ENCODE measurements at regions of chr3 and their contacts with region 1.

Region 1: DNA sequence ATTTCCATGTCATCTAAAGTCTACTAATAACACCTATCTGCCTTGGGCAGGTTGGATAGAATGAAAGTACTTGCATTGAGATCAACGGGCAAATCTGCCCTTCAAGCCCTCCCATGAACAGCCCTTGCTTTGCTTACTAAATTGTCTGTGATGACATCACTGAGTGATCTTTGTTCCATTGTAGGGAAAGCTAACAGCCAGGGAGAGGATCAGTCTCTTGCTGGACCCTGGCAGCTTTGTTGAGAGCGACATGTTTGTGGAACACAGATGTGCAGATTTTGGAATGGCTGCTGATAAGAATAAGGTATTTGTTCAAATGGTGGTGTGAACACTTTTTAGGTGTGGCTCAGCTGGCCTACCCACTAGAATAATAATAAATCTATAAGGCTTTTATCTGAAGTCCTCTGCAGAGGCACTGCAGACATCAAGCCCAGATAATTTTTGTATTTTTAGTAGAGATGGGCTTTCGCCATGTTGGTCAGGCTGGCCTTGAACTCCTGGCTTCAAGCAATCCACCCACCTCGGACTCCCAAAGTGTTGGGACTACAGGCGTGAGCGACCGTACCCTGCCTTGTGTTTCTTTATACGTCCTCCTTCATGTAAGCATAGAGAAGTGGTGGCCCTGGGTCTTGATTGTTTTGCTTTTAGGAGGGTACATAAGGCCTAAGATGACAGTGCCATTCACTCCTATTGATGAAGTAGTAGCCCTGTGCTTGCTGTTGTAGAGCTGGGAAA is 5.7 kb downstream of the PCCB start:
- DNase-seq: no peak
- H3K4me3 ChIP-seq: no peak overlapping the region
- H3K27ac ChIP-seq: no peak overlapping the region
- H3K4me1 ChIP-seq: peaks cover 0 to 9% of the 10 kb centered on the region in 2 donors
- H3K27me3 ChIP-seq: no peaks in the 10 kb centered on the region
- CTCF ChIP-seq: no peak
- POLR2A ChIP-seq: no peak

Region 2: DNA sequence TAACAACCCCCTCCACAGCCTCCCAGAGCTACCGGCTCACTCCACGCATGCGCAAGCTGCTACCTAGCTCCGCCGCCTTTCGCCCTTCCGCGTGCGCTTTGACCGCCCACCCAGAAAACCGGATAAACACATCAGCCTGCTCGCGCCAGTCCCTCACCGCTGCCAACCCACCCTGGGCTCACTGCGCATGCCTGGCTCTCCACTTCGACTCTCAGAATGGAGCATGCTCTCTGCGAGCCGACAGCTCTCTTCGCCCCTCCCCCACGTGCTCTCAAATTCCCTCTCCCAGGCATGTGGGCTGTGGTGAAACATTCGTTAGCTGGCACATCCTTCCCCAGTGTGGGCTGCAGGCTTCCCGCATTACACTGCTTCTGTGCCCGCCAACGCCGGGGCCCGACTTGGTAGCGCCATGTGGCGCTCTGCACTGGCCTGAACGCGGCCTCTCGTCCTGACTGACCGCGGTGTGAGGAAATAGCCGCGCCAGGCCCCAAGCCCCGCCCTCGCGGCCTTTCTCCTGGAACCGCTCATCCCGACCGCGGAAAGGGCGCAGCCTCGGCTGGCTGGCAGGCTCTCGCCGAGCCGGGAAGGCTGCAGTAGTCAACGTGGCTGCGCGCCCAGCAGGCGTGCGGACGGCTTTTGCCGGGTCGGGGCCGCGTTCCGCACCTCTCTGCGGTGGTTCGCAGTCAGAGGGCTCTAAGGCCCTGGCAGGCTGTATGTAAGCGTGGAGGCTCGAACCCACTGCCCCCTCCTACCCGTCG is 59.3 kb before region 1 on chr3:
- intact Hi-C with region 1: loop called (anchors 2 kb)
- DNase-seq: peak; percentile 98
- H3K4me3 ChIP-seq: peak overlapping the region; percentile 75 to 99 (median 88)
- H3K27ac ChIP-seq: peak overlapping the region; percentile 100
- H3K4me1 ChIP-seq: peaks cover 0 to 3% of the 10 kb centered on the region in 2 donors
- H3K27me3 ChIP-seq: no peaks in the 10 kb centered on the region
- CTCF ChIP-seq: no peak
- POLR2A ChIP-seq: peak; percentile 51

Region 3: DNA sequence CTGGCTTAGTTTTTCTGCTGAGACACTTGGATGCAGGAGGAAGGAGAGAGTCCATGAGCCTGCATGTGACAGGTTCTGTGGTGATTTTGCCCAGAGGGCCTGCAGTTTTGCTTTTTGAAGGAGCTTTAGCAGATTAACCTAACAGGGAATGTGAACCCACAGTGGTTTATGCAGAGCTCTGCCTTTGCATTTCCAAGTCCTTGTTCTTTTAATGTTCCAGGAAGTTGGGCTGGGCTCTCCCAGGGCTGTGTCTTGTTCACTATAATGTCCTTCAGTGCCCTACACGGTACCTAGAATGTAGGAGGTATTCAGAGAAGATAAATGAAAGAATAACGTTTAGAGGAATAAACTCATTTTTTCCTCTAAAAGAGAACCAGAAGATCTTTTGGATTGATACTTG is 44.6 kb after region 1 on chr3:
- intact Hi-C with region 1: loop called (anchors 2 kb)
- DNase-seq: no peak
- H3K4me3 ChIP-seq: no peak overlapping the region
- H3K27ac ChIP-seq: no peak overlapping the region
- H3K4me1 ChIP-seq: no peaks in the 10 kb centered on the region
- H3K27me3 ChIP-seq: no peaks in the 10 kb centered on the region
- CTCF ChIP-seq: no peak
- POLR2A ChIP-seq: no peak

Measured in breast epithelium (tissue), 4 donors.